ENCODE measurements at regions of chr20 and their contacts with region 1.

Region 1: GRCh38 chr20:309841-310644 is 12.7 kb downstream of the ZCCHC3 start:
- DNase-seq: peak; percentile 94 to 97 (median 97)
- H3K4me3 ChIP-seq: peak overlapping the region; percentile 31 to 71 (median 66)
- H3K27ac ChIP-seq: peak overlapping the region; percentile 64 to 90
- H3K4me1 ChIP-seq: peaks cover 0 to 17% (median 15%) of the 10 kb centered on the region in 4 experiments
- H3K27me3 ChIP-seq: no peaks in the 10 kb centered on the region

Region 2: GRCh38 chr20:208942-209566 is 101.0 kb before region 1 on chr20:
- CTCF ChIA-PET with region 1: no interaction called
- POLR2A ChIA-PET with region 1: no interaction called
- DNase-seq: peak; percentile 59 to 77 (median 73)
- H3K4me3 ChIP-seq: no peak overlapping the region
- H3K27ac ChIP-seq: no peak overlapping the region
- H3K4me1 ChIP-seq: no peaks in the 10 kb centered on the region
- H3K27me3 ChIP-seq: peaks cover 0 to 5% (median 0%) of the 10 kb centered on the region in 5 experiments

Region 3: GRCh38 chr20:297925-298765 is 11.9 kb before region 1 on chr20:
- CTCF ChIA-PET with region 1: interaction called, 28 read pairs
- POLR2A ChIA-PET with region 1: interaction called, 12 read pairs
- DNase-seq: peak in 2 of 3 donors; percentile 41 to 45
- H3K4me3 ChIP-seq: peak overlapping the region; percentile 86 to 98 (median 97)
- H3K27ac ChIP-seq: peak overlapping the region; percentile 93 to 95
- H3K4me1 ChIP-seq: peaks cover 17 to 45% (median 32%) of the 10 kb centered on the region in 4 experiments
- H3K27me3 ChIP-seq: no peaks in the 10 kb centered on the region

Region 4: DNA sequence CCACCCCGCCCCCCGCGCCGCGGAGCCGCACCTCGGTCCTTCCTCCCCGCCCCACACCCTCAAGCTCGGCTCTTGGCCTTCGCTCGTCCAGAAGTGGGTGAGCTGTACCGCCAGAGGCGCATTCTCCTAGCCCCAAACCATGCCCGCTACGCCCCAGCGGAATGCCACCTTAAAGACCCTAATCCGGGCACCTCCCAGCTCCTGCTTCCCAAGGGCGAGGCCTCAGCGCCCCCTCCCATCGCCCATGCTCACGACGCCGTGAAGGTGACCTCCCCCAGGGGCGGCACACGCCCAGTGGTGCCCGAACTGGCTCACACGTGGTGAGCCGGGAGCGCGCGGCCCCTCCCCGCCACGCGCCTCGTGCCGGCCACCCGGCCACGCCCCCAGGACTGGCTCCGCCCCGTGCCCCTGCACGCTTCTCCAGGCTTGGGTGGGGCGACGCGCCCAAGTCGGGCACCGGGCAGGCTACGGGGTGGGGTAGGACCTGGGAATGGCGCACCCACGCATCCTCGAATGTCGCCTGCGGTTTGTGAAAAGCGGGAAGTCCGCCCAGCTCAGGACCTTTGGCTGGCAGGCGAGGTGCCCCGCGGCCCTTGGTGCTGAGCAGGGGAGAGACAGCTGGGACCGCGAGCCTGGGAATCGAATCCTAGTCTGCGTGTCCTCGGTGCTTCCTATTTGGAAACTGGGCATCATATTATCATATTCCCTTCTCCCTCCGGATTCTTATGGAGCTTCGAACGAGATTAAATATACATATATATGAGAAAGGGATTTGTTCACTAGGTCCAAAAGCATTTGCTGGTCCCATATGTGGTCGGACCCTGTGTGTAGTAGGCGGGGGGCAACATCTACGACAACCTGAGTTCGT is 14.4 kb after region 1 on chr20:
- CTCF ChIA-PET with region 1: interaction called, 18 read pairs
- POLR2A ChIA-PET with region 1: interaction called, 6 read pairs
- DNase-seq: peak; percentile 88 to 94 (median 94)
- H3K4me3 ChIP-seq: peak overlapping the region; percentile 81 to 94 (median 88)
- H3K27ac ChIP-seq: peak overlapping the region; percentile 68 to 84
- H3K4me1 ChIP-seq: peaks cover 5 to 40% (median 36%) of the 10 kb centered on the region in 4 experiments
- H3K27me3 ChIP-seq: no peaks in the 10 kb centered on the region